ENCODE measurements at regions of chr1 and their contacts with region 1.

Region 1: DNA sequence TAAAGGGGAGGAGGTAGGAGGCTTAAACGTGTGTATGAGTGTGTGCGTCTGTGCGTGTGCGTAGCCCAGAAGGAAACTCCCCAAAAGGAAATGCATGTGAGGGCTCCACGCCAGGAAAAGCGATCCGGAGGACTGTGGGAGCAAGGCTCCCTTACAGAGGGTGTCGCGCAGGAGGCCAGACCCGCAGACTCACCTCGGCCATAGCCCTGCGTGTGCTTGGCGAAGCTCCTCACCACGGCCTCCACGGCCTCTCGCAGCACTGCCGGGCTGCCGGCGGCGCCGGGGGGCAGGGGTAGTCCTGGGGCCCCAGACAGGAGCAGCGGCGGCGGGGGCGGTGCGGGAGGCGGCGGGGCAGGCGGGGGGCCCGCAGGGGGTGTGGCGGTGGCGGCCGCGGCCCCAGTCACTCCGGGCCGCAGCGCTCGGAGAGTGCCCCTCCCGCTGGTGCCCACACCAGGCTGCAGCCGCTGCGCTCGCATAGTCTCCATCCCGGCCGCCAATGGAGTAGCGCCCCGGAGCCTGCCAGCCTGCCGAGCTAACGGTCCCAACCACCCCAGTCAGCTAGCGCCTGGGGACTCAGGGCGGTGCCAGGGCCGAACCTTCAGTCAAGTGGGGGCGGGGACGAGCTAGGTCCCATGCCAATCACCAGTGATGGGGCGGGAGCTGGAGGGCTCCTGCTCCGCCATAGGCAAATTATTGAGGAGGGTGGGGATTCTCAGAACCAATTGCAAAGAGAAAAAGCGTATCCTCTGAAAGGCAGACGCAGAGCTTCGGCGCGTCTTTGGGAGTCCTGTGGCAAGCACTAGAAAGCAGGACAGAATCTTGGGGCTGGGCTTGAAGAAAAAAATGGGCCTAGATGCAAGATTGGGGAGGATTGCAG is at the start of gene LIX1L:
- DNase-seq: peak; percentile 97 to 98 (median 97)
- ATAC-seq: peak; percentile 82 to 92 (median 88)
- H3K4me3 ChIP-seq: peak within 1 kb of the TSS; percentile 60 to 88 (median 77)
- H3K27ac ChIP-seq: peak within 1 kb of the TSS; percentile 93 to 100 (median 98)
- H3K4me1 ChIP-seq: peaks cover 8 to 77% (median 48%) of the 10 kb centered on the region in 12 donors
- H3K27me3 ChIP-seq: no peaks in the 10 kb centered on the region
- CTCF ChIP-seq: peak in 1 of 12 donors; percentile 5
- POLR2A ChIP-seq: peak; percentile 27 to 85
- total RNA-seq, gene LIX1L: 21.7 to 31.5 (median 26.4) TPM

Region 2: DNA sequence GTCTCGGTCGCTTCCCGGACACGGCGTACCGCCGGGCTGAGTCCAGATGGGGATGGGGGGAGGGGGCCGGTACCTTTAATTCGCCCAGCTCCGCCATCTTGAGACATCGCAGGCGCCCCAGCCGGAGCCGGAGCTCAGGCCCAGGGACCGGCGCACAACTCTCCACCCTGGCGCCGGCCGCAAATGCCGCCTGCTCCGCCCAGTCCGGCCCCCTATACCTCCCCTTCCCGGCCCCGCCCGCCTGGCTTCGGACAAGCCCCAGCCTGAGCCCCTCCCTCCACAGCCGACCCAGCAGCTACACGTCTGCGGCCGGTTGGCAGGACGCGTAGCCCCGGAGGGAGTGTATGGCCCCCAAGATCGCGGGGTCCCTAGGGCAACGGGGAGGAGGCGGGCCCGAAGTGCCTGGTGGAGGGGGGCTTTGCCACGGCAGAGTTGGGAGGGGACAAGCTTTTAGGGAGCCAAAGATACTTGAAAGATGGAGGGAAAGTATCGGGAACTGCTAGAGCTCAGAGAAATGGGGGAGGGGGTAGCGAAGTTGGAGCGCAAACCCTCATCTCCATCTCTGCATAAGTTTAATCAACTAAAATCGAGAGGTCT is 98.7 kb before region 1 on chr1 and contains the start of gene PIAS3:
- intact Hi-C with region 1: loop called in 5 of 10 experiments (anchors 2 to 10 kb)
- DNase-seq: peak; percentile 96 to 98 (median 98)
- ATAC-seq: peak; percentile 96 to 97 (median 96)
- H3K4me3 ChIP-seq: peak within 1 kb of the TSS; percentile 55 to 97 (median 90)
- H3K27ac ChIP-seq: peak within 1 kb of the TSS; percentile 89 to 95 (median 92)
- H3K4me1 ChIP-seq: peaks cover 0 to 22% (median 13%) of the 10 kb centered on the region in 12 donors
- H3K27me3 ChIP-seq: no peaks in the 10 kb centered on the region
- CTCF ChIP-seq: no peak
- POLR2A ChIP-seq: peak in 1 of 2 donors; percentile 91
- total RNA-seq, gene PIAS3: 14.2 to 25.8 (median 15.6) TPM

Region 3: DNA sequence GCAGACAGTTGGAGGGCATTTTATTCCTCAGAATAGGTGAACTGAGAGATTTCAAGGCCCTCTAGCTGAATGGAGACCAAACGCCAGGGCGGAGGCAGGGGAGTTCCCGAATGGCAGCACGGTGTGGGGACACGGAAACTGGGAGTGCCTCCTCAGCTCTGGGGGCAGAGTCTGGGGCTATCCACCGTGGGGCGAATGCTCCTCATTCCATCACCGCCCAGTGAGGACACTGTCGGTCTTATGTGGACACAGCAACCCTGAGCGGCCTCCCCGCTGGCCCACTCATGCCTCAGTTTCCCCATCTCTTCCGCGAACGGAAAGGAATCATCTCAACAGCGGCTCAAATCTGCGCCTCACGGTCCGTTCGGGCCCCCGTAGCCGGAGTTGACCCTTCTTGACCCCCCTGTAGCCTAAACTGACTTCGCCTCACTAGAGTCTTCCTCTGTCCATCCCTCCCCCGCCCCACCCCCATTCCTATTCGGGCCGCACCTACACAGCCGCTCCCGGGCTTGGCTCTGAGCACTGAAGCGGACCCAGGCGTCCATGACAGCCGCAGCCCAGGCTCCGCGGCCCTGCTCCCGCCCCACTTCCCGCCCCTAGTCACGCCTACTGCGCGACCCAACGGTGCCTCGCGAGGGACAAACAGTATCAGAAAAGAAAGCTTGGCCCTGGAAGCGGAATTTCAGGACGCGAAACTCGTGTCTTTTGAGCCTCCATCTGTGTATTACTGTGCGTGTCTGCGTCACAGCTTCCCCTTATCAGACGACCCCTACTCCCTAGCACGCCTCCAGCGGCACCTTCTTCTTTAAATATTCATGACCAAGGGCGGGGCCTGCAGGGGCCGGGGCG is 39.3 kb before region 1 on chr1 and contains the start of gene PEX11B:
- intact Hi-C with region 1: loop called in 5 of 10 experiments (anchors 5 kb)
- DNase-seq: peak; percentile 89 to 93 (median 92)
- ATAC-seq: peak; percentile 91 to 96 (median 95)
- H3K4me3 ChIP-seq: peak within 1 kb of the TSS; percentile 72 to 99 (median 89)
- H3K27ac ChIP-seq: peak within 1 kb of the TSS; percentile 64 to 97 (median 92)
- H3K4me1 ChIP-seq: peaks cover 5 to 29% (median 22%) of the 10 kb centered on the region in 12 donors
- H3K27me3 ChIP-seq: no peaks in the 10 kb centered on the region
- CTCF ChIP-seq: no peak
- POLR2A ChIP-seq: peak in 1 of 2 donors; percentile 34
- total RNA-seq, gene PEX11B: 17.7 to 27.5 (median 24.5) TPM

Region 4: GRCh38 chr1:145927063-145927886 is 30.4 kb before region 1 on chr1 and contains the start of gene RBM8A:
- intact Hi-C with region 1: loop called in 7 of 10 experiments (anchors 1 to 5 kb)
- DNase-seq: peak; percentile 92 to 96 (median 96)
- ATAC-seq: peak; percentile 96 to 99 (median 98)
- H3K4me3 ChIP-seq: peak within 1 kb of the TSS; percentile 52 to 90 (median 74)
- H3K27ac ChIP-seq: peak within 1 kb of the TSS; percentile 88 to 99 (median 94)
- H3K4me1 ChIP-seq: peaks cover 0 to 21% (median 15%) of the 10 kb centered on the region in 12 donors
- H3K27me3 ChIP-seq: no peaks in the 10 kb centered on the region
- CTCF ChIP-seq: peak; percentile 35 to 70 (median 60)
- POLR2A ChIP-seq: peak in 1 of 2 donors; percentile 96
- total RNA-seq, gene RBM8A: 58.7 to 100 (median 75.7) TPM

Region 5: GRCh38 chr1:145942405-145942804 is 15.3 kb before region 1 on chr1:
- intact Hi-C with region 1: loop called in 1 of 10 experiments (anchors 1 kb)
- DNase-seq: no peak
- ATAC-seq: no peak
- H3K4me3 ChIP-seq: no peak overlapping the region
- H3K27ac ChIP-seq: no peak overlapping the region
- H3K4me1 ChIP-seq: no peaks in the 10 kb centered on the region
- H3K27me3 ChIP-seq: no peaks in the 10 kb centered on the region
- CTCF ChIP-seq: no peak
- POLR2A ChIP-seq: no peak